Mammary epithelial cell (primary cell): ENCODE measurements at regions of chr11 and their contacts with region 1.

Region 1: DNA sequence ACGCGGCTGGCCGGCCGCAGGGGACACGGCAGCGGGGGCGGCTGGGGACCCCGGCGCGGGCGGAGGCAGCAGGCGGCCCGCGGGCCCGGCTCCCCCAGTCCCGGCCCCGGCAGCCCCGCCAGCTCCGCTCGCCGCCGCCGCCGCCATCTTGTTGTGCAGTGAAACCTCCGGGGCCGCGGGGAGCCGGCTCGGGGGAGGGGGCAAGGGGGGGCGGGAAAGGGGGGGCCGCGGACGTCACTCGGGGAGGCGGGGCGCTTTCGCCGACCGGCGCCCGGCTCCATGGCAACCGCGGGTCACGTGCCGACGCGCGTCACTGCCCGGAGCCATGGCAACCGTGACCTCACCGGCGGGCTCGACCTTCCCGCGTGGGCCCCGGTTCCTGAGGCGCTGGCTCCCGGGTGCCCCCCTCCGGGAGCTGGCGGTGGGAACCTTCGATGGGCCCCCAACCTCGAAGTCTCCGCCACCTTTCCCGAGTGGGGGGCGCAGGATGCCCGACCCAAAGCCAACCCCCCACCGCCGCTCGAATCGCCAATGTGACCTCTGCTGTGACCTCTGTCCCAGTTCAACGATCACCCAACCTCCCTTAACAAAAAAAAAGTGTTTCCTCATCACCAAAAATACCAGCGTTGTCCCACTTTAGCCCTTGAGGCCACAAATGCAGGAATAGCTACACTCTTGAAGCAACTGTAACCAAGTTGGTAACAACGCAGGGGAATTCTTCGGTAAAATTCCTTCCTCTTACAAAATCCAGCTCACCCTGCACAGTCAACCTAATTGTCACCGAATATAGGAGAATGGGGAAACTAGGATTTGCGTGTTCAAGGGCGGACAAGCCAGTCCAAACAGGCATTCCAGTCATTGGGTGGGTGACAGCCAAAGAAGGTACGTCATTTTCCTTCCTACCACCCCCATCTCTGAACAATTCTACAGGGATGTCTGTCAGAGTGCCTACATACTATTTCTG is at the start of gene SIK3:
- DNase-seq: peak; percentile 88
- H3K4me3 ChIP-seq: peak within 1 kb of the TSS; percentile 89 to 94 (median 90)
- H3K27ac ChIP-seq: peak within 1 kb of the TSS; percentile 94
- H3K4me1 ChIP-seq: peaks cover 37% of the 10 kb centered on the region
- H3K27me3 ChIP-seq: no peaks in the 10 kb centered on the region
- CTCF ChIP-seq: peak; percentile 35 to 68
- total RNA-seq, gene SIK3: 22.8 to 36.5 TPM

Region 2: GRCh38 chr11:116871248-116871647 is 227.3 kb before region 1 on chr11:
- CTCF ChIA-PET with region 1: no interaction called
- dilution Hi-C with region 1: no loop called
- in situ Hi-C with region 1: loop called (anchors 5 to 10 kb)
- intact Hi-C with region 1: no loop called
- DNase-seq: peak; percentile 87
- H3K4me3 ChIP-seq: no peak overlapping the region
- H3K27ac ChIP-seq: peak overlapping the region; percentile 94
- H3K4me1 ChIP-seq: peaks cover 39% of the 10 kb centered on the region
- H3K27me3 ChIP-seq: no peaks in the 10 kb centered on the region
- CTCF ChIP-seq: no peak

Region 3: DNA sequence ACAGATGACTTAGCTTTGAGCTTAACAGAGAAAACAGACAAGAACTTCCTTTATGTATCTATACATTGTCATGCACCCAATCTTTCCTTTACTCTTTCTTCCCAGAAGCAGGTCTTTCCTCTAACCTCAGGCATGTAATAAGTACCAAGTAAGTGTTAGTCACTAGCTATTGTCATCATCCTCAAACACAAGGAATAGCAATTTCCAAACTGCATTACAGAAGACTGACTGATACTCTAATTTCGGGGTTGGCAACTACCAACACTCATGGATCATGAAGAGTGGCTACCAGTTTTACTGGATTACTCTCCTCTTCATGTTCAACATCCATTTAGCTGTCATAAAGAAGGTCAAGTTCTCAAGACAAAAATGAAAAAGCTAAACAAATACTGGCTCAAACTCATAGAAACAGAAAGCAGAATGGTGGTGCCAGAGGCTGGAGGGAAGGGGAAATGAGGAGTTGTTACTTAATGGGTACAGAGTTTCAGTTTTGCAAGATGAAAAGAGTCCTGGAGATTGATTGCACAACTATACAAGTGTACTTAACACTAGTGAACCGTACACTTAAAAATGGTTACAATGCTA is 111.9 kb before region 1 on chr11:
- CTCF ChIA-PET with region 1: no interaction called
- dilution Hi-C with region 1: no loop called
- in situ Hi-C with region 1: loop called in 1 of 2 experiments (anchors 10 kb)
- intact Hi-C with region 1: loop called (anchors 2 kb)
- DNase-seq: peak; percentile 94
- H3K4me3 ChIP-seq: peak overlapping the region in 2 of 3 experiments; percentile 11 to 27
- H3K27ac ChIP-seq: peak overlapping the region; percentile 84
- H3K4me1 ChIP-seq: peaks cover 61% of the 10 kb centered on the region
- H3K27me3 ChIP-seq: no peaks in the 10 kb centered on the region
- CTCF ChIP-seq: no peak

Region 4: GRCh38 chr11:117039900-117040299 is 58.7 kb before region 1 on chr11:
- CTCF ChIA-PET with region 1: no interaction called
- dilution Hi-C with region 1: loop called (anchors 5 kb)
- in situ Hi-C with region 1: no loop called
- intact Hi-C with region 1: loop called (anchors 5 kb)
- DNase-seq: peak; percentile 83
- H3K4me3 ChIP-seq: no peak overlapping the region
- H3K27ac ChIP-seq: peak overlapping the region; percentile 42
- H3K4me1 ChIP-seq: peaks cover 31% of the 10 kb centered on the region
- H3K27me3 ChIP-seq: no peaks in the 10 kb centered on the region
- CTCF ChIP-seq: no peak